IMR-90 (cell line): ENCODE measurements at regions of chr19 and their contacts with region 1.

Region 1: GRCh38 chr19:57664269-57665127 is 4.2 kb upstream of the ZSCAN4 start:
- DNase-seq: peak; percentile 31
- ATAC-seq: peak; percentile 97
- H3K4me3 ChIP-seq: peak overlapping the region; percentile 54
- H3K27ac ChIP-seq: peak overlapping the region; percentile 14; the same call in 1 of the 2 replicates
- H3K4me1 ChIP-seq: no peaks in the 10 kb centered on the region
- H3K27me3 ChIP-seq: peaks cover 3% of the 10 kb centered on the region
- CTCF ChIP-seq: no peak
- POLR2A ChIP-seq: no peak
- RAD21 ChIP-seq: no peak

Region 2: GRCh38 chr19:57613941-57614743 is 50.4 kb before region 1 on chr19 and contains the start of gene ZNF134:
- CTCF ChIA-PET with region 1: no interaction called
- POLR2A ChIA-PET with region 1: interaction called, 18 read pairs
- dilution Hi-C with region 1: no loop called
- in situ Hi-C with region 1: no loop called
- intact Hi-C with region 1: no loop called
- DNase-seq: peak; percentile 87
- ATAC-seq: peak; percentile 99
- H3K4me3 ChIP-seq: peak within 1 kb of the TSS; percentile 96
- H3K27ac ChIP-seq: peak within 1 kb of the TSS; percentile 66
- H3K4me1 ChIP-seq: peaks cover 2% of the 10 kb centered on the region; the same call in 1 of the 2 replicates
- H3K27me3 ChIP-seq: no peaks in the 10 kb centered on the region
- CTCF ChIP-seq: peak; percentile 39
- POLR2A ChIP-seq: 0 out of 2 replicates have a peak, but pooled peaks have one; percentile 42
- RAD21 ChIP-seq: no peak; the same call in 1 of the 2 replicates
- total RNA-seq, gene ZNF134: 31.0 and 31.1 TPM in 2 replicates